PC-9 (cell line): ENCODE measurements at regions of chr17 and their contacts with region 1.

Region 1: DNA sequence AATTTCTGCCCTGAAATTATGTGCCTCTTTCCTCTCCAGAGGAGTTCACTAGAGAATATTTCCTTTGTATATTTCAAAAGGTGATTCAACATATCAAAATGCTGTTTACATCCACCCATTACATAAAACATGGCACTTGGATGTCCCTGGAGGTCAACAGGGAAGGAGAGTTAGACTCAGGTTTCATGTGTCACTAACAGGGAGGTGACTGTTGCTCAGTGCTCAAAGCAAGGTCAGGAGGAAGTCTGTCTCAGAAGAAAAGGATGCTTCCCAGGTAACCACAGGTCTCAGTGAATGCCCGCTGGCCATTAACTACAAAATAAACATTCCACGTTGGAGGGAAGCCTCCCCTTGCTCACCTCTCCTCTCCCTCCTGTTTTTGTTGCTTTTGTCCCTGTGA is 198.6 kb downstream of the AXIN2 start:
- DNase-seq: peak; percentile 64 to 98
- H3K4me3 ChIP-seq: no peak overlapping the region
- H3K27ac ChIP-seq: peak overlapping the region; percentile 67
- H3K4me1 ChIP-seq: peaks cover 35% of the 10 kb centered on the region
- H3K27me3 ChIP-seq: no peaks in the 10 kb centered on the region
- CTCF ChIP-seq: no peak

Region 2: DNA sequence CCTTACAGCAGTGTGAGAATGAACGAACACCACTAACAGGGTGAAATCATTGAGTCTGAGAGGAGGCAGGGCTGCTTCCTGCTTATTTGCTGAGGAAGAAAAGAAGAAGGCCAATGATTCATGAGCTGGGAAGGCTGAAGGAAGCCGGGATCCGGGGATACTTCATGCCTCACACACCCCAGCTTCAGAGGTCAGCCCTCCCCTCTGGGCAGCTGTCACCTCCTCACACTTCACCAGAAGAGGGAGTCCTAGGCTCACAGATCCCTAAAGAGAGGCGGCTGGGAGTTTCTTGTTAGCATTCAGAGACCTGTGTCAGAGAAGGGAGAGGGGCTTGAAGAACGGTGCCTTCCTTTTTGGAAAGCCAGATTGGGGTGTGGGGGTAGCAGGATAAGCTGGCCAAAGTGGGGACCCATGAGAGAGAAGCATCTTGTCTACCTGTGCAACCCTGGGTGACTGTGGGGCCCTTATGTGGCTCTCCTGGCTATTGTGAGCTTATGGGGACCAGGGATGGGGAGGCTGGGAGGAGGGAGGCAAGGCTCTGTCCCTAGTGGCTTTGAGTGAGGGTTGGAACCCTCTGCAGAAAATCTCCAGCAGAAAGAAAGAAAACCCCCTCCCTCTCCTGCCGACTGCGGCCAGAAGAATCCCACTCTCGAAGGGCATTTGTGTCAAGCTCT is 131.0 kb before region 1 on chr17:
- CTCF ChIA-PET with region 1: interaction called, 3 read pairs
- POLR2A ChIA-PET with region 1: no interaction called
- intact Hi-C with region 1: loop called (anchors 5 kb)
- DNase-seq: peak; percentile 63 to 78
- H3K4me3 ChIP-seq: no peak overlapping the region
- H3K27ac ChIP-seq: no peak overlapping the region
- H3K4me1 ChIP-seq: peaks cover 16% of the 10 kb centered on the region
- H3K27me3 ChIP-seq: no peaks in the 10 kb centered on the region
- CTCF ChIP-seq: peak; percentile 83